Heart left ventricle (tissue), 16 donors: ENCODE measurements at regions of chr22 and their contacts with region 1.

Region 1: DNA sequence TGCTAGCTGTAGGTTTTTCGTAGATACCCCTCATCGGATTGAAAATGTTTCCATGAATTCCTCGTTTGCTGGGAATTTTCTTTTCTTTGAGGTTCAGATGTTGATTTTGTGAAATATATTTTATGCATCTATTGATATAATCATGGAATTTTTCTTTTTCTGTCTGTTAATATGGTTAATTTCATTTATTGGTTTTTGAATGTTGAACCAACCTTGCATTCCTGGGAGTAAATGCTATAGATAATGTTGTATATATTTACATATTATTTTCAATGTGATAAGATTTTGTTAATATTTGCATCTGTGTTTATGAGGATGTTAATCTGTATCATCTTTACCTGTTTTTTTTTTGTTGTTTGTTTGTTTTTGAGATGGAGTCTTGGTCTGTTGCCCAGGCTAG is 10.6 kb upstream of the NDUFA6 start:
- DNase-seq: no peak
- ATAC-seq: no peak
- H3K4me3 ChIP-seq: no peak overlapping the region
- H3K27ac ChIP-seq: no peak overlapping the region
- H3K4me1 ChIP-seq: no peaks in the 10 kb centered on the region
- H3K27me3 ChIP-seq: no peaks in the 10 kb centered on the region
- CTCF ChIP-seq: no peak
- POLR2A ChIP-seq: no peak

Region 2: DNA sequence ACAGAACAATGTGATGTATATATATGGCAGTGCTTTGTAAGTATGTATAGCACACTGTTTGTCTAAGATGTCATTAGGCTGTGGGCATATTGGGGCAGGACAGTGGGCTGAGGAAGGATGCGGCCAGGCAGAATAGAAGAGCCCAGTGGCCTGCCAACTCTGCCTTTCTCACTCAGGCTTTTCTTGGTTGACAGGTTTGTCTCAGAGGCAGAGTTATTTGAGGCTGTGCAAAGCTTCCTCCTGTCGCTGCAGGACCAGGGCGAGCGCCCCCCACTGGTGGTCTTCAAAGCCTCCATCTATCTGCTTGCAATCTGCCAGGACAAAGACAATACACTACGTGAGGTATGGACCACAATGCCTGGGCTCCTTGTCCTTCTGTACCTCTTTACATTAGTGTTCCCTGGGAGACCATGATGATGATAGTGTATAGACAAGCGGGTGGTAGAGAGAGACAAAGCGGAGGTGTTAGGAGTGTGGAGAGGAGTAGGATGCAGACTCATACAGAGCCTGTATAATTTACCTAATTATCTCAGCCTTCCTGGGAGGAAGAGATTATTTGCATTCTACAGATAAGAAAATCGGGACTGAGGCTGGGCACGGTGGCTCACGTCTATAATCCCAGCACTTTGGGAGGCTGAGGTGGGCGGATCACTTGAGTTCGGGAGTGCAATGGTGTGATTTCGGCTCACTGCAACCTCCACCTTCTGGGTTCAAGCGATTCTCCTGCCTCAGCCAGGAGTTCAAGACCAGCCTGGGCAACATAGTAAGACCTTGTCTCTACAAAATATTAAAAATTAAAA is 338.0 kb before region 1 on chr22:
- intact Hi-C with region 1: loop called in 1 of 10 experiments (anchors 10 kb)
- DNase-seq: no peak
- ATAC-seq: no peak
- H3K4me3 ChIP-seq: no peak overlapping the region
- H3K27ac ChIP-seq: no peak overlapping the region
- H3K4me1 ChIP-seq: no peaks in the 10 kb centered on the region
- H3K27me3 ChIP-seq: no peaks in the 10 kb centered on the region
- CTCF ChIP-seq: peak in 8 of 12 donors; percentile 7 to 32 (median 24)
- POLR2A ChIP-seq: no peak